HCT116 (cell line): ENCODE measurements at regions of chr13 and their contacts with region 1.

Region 1: GRCh38 chr13:32650705-32651311 is 64.6 kb downstream of the PDS5B start:
- DNase-seq: peak; percentile 43
- ATAC-seq: peak; percentile 88
- H3K4me3 ChIP-seq: no peak overlapping the region
- H3K27ac ChIP-seq: no peak overlapping the region
- H3K4me1 ChIP-seq: peaks cover 0 to 6% of the 10 kb centered on the region in 2 experiments; a peak in 1 of 4 replicates
- H3K27me3 ChIP-seq: no peaks in the 10 kb centered on the region
- CTCF ChIP-seq: peak; percentile 36 to 84 (median 82); a peak in 5 of 6 replicates
- POLR2A ChIP-seq: no peak
- RAD21 ChIP-seq: peak; percentile 58

Region 2: GRCh38 chr13:32381539-32381938 is 269.3 kb before region 1 on chr13:
- CTCF ChIA-PET with region 1: no interaction called
- POLR2A ChIA-PET with region 1: no interaction called
- RAD21 ChIA-PET with region 1: no interaction called
- intact Hi-C with region 1: no loop called
- DNase-seq: peak; percentile 2
- ATAC-seq: peak; percentile 49
- H3K4me3 ChIP-seq: no peak overlapping the region
- H3K27ac ChIP-seq: no peak overlapping the region
- H3K4me1 ChIP-seq: no peaks in the 10 kb centered on the region
- H3K27me3 ChIP-seq: no peaks in the 10 kb centered on the region
- CTCF ChIP-seq: peak in 2 of 3 experiments; percentile 25 to 36; a peak in 3 of 6 replicates
- POLR2A ChIP-seq: no peak
- RAD21 ChIP-seq: peak; percentile 32

Region 3: DNA sequence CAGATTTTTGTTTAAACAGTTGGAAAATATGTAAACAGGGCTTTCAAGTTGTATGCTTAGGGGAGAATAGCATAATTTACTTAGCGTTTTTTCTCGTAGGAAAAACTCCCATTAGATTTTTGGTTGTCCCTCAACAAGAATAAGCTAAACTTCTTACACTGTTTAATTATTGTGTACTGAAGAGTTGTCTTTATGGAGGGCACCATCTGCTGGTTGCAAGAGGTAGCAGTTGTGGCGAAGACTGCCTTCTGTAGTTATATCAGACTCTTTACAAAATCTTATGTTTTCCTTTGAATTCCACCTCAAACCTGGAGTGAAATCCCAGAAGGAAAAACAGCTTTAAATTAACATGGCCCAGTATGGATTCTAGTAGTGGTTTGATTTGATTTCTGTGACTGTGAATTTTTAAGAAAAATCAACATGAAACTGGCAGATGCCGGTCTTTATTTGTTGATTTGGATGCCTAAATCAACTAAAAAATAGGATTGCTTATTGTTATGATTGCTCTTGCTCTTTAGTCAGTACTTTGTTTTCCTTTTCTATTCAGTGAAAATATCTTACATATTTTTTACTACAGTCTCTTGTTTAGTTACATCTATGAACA is 11.2 kb before region 1 on chr13:
- CTCF ChIA-PET with region 1: interaction called, 18 read pairs
- POLR2A ChIA-PET with region 1: no interaction called
- RAD21 ChIA-PET with region 1: no interaction called
- intact Hi-C with region 1: no loop called
- DNase-seq: peak; percentile 43
- ATAC-seq: peak; percentile 79
- H3K4me3 ChIP-seq: no peak overlapping the region
- H3K27ac ChIP-seq: no peak overlapping the region
- H3K4me1 ChIP-seq: no peaks in the 10 kb centered on the region
- H3K27me3 ChIP-seq: no peaks in the 10 kb centered on the region
- CTCF ChIP-seq: peak; percentile 61 to 89 (median 83); a peak in 5 of 6 replicates
- POLR2A ChIP-seq: no peak
- RAD21 ChIP-seq: peak; percentile 64